ENCODE measurements at regions of chr22 and their contacts with region 1.

Region 1: DNA sequence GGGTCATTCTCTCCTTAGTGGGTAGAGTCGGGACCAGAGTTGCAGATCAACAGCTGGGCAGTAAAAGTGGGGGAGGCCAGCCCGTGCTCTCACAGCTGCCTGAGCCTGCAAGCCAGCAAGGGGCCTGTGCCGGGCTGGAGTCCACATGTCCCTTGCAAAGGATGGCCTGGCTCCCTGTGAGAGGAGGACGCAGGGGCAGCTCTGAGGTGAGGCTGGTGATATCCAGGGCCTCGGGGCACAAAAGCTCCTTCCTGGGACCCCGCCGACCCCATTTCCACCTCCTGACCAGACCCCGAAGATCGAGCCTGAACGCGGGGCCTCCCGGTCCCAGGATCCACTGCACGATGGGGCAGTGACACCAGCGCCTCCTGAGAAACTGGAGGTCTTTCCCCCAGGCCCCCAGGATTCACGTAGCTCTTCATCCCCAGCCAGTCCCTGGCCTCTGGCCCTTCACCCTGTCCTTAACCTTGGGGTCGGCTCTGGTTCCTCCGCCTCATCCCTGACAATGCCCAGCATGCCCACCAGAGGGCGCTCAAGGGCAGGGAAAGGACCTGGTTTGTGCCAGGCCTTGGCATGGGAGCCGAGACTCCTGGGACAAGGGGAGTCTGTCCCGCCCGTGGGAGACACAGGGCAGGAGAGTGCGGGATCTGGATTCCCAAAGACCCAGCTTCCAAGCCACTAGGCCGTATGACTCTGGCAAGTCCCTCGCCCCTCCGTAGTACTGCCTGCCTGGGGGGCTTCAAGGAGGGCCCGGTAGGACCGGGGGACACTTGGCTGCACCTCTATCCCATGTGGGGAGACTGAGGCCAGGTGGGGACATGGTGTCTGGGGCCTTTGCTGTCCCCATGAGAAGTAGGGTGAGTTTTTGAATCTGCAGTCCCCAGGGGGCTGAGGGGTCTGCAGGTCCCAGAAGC is 17.8 kb upstream of the WNT7B start:
- DNase-seq: peak; percentile 88
- ATAC-seq: peak; percentile 82
- H3K4me3 Mint-ChIP-seq: no peak overlapping the region
- H3K27ac Mint-ChIP-seq: no peak overlapping the region
- H3K4me1 Mint-ChIP-seq: no peaks in the 10 kb centered on the region
- H3K27me3 Mint-ChIP-seq: peaks cover 5% of the 10 kb centered on the region

Region 2: DNA sequence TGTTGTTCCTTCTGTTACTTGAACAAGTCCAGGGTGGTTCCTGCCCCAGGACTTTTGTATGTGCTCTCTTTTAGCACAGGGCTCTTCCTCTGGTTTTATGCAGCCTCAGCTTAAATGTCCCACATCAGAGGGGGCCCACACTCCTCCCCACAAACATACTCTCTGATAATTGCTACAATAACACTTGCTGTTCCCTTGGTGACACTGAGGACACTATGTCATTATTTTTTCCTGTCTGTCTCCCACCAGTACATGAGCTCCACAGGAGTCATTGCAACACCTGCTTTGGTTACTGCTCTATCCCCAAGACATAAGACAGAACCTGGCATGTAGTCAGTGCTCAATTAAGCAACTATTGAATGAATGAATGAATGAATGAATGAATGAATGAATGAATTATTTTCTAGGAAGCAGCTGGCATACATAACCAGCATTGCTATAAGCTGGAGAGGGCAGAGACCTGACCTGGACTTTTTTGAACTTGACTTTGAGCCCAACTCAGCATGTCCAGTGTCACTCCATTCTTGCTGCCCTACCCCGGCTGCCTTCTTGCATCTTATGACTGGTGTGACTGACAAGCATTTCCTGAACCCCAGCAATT is 10.3 kb before region 1 on chr22:
- CTCF ChIA-PET with region 1: interaction called, 12 read pairs
- POLR2A ChIA-PET with region 1: no interaction called
- intact Hi-C with region 1: no loop called
- DNase-seq: no peak
- ATAC-seq: no peak
- H3K4me3 Mint-ChIP-seq: no peak overlapping the region
- H3K27ac Mint-ChIP-seq: no peak overlapping the region
- H3K4me1 Mint-ChIP-seq: no peaks in the 10 kb centered on the region
- H3K27me3 Mint-ChIP-seq: no peaks in the 10 kb centered on the region

Region 3: GRCh38 chr22:46006379-46007002 is 11.7 kb after region 1 on chr22:
- CTCF ChIA-PET with region 1: interaction called, 24 read pairs
- POLR2A ChIA-PET with region 1: no interaction called
- intact Hi-C with region 1: no loop called
- DNase-seq: peak; percentile 94
- ATAC-seq: peak; percentile 91
- H3K4me3 Mint-ChIP-seq: no peak overlapping the region
- H3K27ac Mint-ChIP-seq: no peak overlapping the region
- H3K4me1 Mint-ChIP-seq: peaks cover 7% of the 10 kb centered on the region
- H3K27me3 Mint-ChIP-seq: no peaks in the 10 kb centered on the region

Region 4: DNA sequence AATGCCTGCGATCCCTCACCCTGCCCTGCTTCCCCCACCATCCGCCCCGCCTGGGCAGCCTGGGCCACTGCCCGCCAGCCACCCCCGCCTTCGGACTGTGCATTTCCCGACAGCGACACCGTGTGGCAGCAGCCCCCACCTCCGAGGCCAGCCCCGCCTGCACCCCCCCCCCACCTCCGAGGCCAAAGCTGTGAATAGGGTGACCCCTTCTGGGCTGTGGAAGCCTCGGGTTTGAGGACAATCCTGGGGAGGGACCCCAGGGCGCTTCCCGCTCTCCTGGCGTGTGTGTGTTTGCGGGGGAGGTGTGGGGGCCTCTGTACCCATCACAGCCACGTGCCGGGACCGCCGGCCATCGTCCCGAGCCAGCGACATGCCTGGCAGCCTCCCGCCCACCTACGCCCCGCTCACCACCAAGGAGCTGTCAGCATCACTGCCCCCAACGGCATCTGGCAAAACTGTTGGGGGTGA is 121.8 kb after region 1 on chr22:
- CTCF ChIA-PET with region 1: interaction called, 23 read pairs
- POLR2A ChIA-PET with region 1: no interaction called
- intact Hi-C with region 1: loop called (anchors 1 kb)
- DNase-seq: peak; percentile 95
- ATAC-seq: peak; percentile 96
- H3K4me3 Mint-ChIP-seq: no peak overlapping the region
- H3K27ac Mint-ChIP-seq: no peak overlapping the region
- H3K4me1 Mint-ChIP-seq: peaks cover 3% of the 10 kb centered on the region
- H3K27me3 Mint-ChIP-seq: no peaks in the 10 kb centered on the region

Region 5: GRCh38 chr22:46139895-46140350 is 145.2 kb after region 1 on chr22:
- CTCF ChIA-PET with region 1: no interaction called
- POLR2A ChIA-PET with region 1: no interaction called
- intact Hi-C with region 1: no loop called
- DNase-seq: no peak
- ATAC-seq: no peak
- H3K4me3 Mint-ChIP-seq: no peak overlapping the region
- H3K27ac Mint-ChIP-seq: no peak overlapping the region
- H3K4me1 Mint-ChIP-seq: no peaks in the 10 kb centered on the region
- H3K27me3 Mint-ChIP-seq: no peaks in the 10 kb centered on the region

Region 6: DNA sequence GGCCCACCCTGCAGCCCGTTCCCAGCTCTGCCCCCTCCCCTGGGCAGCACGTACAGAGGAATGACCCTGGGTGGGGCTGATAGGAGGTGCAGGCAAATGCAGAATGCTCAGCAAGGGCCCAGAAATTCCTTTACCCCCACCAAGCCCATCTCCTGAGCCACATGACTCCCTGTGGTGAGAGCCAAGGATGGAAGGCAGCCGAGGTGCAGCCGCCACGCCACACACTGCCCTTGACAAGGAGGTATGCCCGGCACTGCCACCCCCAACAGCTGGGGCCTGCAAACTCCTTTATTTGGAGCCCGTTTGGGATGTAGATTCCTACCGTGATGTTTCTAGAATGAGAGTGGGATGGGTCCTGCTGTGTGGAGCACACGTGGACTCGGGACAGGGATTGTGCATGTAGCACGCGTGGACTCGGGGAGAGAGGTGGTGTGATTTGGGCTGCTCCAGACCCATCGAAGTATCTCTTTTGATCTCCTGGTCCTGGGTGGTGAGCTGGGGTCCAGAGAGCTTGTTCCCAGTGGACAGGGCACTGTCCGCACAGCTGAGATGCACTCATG is 314.9 kb after region 1 on chr22:
- CTCF ChIA-PET with region 1: no interaction called
- POLR2A ChIA-PET with region 1: no interaction called
- intact Hi-C with region 1: loop called in 1 of 2 experiments (anchors 10 kb)
- DNase-seq: no peak
- ATAC-seq: no peak
- H3K4me3 Mint-ChIP-seq: no peak overlapping the region
- H3K27ac Mint-ChIP-seq: no peak overlapping the region
- H3K4me1 Mint-ChIP-seq: peaks cover 2% of the 10 kb centered on the region
- H3K27me3 Mint-ChIP-seq: no peaks in the 10 kb centered on the region

Region 7: DNA sequence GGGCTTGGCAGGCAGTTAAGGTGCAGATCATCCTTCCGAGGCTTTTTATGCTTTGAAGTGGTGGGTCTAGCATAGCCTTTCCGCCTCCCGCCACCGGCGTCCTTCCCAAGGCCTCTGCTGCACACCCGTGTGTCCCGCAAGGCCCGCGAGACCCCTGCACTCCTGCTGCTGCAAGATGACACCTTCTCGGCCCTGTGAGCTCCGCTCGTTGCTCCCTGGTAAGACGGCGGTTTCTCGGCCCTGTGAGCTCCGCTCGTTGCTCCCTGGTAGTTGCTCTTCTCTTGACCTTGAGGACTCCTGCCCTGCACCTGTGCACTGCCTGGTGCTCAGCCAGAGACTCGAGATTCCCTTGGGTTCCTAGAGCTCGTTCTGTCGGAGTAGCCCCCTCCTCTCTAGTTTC is 322.9 kb after region 1 on chr22:
- CTCF ChIA-PET with region 1: interaction called, 8 read pairs
- POLR2A ChIA-PET with region 1: interaction called, 4 read pairs
- intact Hi-C with region 1: loop called (anchors 5 to 10 kb)
- DNase-seq: no peak
- ATAC-seq: no peak
- H3K4me3 Mint-ChIP-seq: no peak overlapping the region
- H3K27ac Mint-ChIP-seq: no peak overlapping the region
- H3K4me1 Mint-ChIP-seq: no peaks in the 10 kb centered on the region
- H3K27me3 Mint-ChIP-seq: no peaks in the 10 kb centered on the region

Region 8: DNA sequence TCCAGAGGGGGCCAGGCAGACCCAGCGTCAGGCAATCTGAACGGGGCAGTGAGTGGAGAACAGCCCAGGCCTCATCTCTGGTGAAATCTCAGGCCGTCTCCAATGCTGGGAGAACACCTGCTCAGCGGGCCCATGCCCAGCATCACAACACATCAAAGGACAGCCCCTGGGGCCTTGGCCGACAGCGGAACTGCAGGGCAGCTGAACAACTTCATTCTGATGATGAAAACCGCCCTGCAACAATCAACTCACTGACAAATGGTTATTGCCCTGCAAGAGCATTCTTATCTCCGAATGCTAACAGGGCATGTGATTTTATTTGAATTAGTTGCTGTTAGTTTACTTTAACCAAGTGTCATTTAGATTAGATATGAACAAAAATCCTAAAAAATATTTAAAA is 528.0 kb after region 1 on chr22:
- CTCF ChIA-PET with region 1: no interaction called
- POLR2A ChIA-PET with region 1: no interaction called
- intact Hi-C with region 1: no loop called
- DNase-seq: no peak
- ATAC-seq: no peak
- H3K4me3 Mint-ChIP-seq: no peak overlapping the region
- H3K27ac Mint-ChIP-seq: no peak overlapping the region
- H3K4me1 Mint-ChIP-seq: no peaks in the 10 kb centered on the region
- H3K27me3 Mint-ChIP-seq: peaks cover 7% of the 10 kb centered on the region

Region 9: DNA sequence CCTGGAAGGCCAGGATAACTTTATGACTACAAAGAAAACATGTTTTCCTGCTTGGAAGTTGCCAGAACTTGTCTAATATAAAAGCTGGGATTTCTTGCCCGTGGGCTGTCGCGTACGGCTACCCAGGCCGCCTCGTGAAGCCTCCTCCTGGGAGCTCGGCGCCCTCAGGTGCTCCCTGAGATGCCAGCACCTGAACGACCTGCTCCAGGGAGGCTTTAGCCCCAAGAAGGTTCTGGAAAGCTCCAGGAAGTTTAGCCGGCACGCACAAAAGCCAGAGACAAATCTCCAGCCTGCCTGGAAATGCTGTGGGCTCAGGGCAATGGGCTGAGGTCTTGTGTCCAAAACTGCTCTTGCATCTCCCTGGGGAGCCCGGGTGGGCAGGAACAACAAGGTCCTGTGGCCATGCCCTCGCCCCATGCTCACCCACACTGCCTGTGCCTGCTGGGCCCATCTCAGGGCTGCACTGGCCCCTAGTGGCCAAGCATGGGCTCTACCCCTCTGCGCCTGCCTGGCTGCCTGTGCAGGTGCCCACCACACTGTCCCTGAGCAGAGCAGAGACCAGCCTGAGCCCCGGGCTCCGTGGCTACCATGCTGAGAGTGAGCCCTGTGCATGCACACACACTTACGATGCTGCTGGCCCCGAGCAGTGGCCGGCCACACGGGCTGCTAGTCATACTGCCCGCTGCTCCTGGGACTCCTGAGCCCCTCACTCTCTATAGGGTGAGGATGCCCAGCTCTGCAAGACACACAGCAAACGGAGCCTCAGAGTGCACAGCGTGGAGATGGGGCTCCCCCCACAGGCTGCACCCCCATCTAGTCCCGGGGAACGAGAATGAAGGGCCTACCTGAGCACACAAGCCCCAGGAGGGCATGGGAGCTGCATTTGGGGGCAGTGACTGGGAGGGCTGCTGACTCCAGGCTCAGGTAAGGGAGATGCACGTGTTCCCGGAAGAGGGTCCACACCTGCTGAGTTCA is 547.5 kb after region 1 on chr22:
- CTCF ChIA-PET with region 1: no interaction called
- POLR2A ChIA-PET with region 1: no interaction called
- intact Hi-C with region 1: loop called in 1 of 2 experiments (anchors 10 kb)
- DNase-seq: peak; percentile 82
- ATAC-seq: peak; percentile 94
- H3K4me3 Mint-ChIP-seq: no peak overlapping the region
- H3K27ac Mint-ChIP-seq: no peak overlapping the region
- H3K4me1 Mint-ChIP-seq: peaks cover 11% of the 10 kb centered on the region
- H3K27me3 Mint-ChIP-seq: peaks cover 25% of the 10 kb centered on the region